ENCODE measurements at regions of chr7 and their contacts with region 1.

Region 1: GRCh38 chr7:87628780-87629569 is 777 bp downstream of the RUNDC3B start:
- DNase-seq: peak; percentile 67
- H3K4me3 ChIP-seq: peak overlapping the region; percentile 48
- H3K27ac ChIP-seq: peak overlapping the region; percentile 55
- H3K4me1 ChIP-seq: no peaks in the 10 kb centered on the region
- H3K27me3 ChIP-seq: no peaks in the 10 kb centered on the region
- CTCF ChIP-seq: no peak

Region 2: GRCh38 chr7:87506246-87507180 is 122.5 kb before region 1 on chr7:
- intact Hi-C with region 1: loop called (anchors 5 kb)
- DNase-seq: no peak
- H3K4me3 ChIP-seq: no peak overlapping the region
- H3K27ac ChIP-seq: no peak overlapping the region
- H3K4me1 ChIP-seq: no peaks in the 10 kb centered on the region
- H3K27me3 ChIP-seq: no peaks in the 10 kb centered on the region
- CTCF ChIP-seq: peak; percentile 25

Region 3: DNA sequence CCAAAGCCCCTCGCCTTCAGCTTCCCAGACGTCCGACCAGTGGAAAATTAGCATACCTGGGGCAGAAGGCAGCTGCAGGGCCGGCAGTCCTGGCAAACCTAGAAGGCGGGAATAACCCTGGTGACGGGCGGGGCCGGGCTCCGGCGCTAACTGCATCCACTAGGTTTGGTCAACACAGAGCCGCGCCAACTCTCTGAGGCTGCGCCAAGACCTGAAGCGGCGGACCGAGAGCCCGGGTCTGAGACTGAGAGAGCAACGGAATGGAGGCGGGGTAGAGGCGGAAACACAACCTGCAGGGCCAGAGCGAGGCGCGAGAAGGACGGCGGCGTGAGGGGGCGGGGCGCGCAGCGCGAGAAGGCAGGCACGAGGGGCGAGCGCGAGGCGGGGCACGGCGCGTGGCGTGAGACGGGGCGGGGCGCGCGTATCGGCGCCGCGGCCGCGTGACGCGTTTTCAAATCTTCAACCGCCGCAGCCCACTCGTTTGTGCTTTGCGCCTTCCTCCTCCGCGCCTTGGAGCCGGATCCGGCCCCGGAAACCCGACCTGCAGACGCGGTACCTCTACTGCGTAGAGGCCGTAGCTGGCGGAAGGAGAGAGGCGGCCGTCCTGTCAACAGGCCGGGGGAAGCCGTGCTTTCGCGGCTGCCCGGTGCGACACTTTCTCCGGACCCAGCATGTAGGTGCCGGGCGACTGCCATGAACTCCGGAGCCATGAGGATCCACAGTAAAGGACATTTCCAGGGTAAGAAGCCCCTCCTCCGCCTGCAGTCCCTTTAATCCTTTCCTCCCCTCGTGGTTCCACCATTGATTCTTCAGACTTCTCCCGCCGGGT is 247.3 kb after region 1 on chr7 and contains the starts of genes DBF4 and SLC25A40:
- intact Hi-C with region 1: loop called (anchors 10 kb)
- DNase-seq: peak; percentile 98
- H3K4me3 ChIP-seq: peak within 1 kb of the TSS; percentile 85
- H3K27ac ChIP-seq: peak within 1 kb of the TSS; percentile 98
- H3K4me1 ChIP-seq: peaks cover 3% of the 10 kb centered on the region
- H3K27me3 ChIP-seq: no peaks in the 10 kb centered on the region
- CTCF ChIP-seq: no peak
- total RNA-seq, gene DBF4: 17.8 to 31.4 TPM
- total RNA-seq, gene SLC25A40: 25.7 to 39.6 TPM

Measured in colonic mucosa (tissue), 4 donors.